ENCODE measurements at regions of chr6 and their contacts with region 1.

Region 1: DNA sequence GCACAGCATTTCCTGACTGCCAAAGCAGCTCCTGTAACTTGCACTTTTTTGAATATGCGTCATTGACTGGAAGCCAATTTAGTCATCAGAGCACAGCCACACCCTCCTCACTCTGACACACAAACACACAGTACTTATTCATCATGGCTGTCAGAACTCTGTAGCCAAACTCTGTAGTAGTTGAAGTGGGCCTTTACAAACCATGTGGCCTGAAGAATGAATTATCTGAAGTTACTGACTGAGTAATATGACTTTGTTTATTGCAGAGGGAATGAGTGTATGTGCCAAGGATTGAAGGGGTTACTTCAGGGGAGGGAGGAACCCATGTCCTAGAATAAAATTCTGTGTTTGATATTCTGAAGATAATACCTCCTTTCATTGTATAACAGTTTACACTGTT is 102.7 kb downstream of the FIG4 start:
- DNase-seq: no peak
- H3K4me3 ChIP-seq: no peak overlapping the region
- H3K27ac ChIP-seq: no peak overlapping the region
- H3K4me1 ChIP-seq: peaks cover 15% of the 10 kb centered on the region
- CTCF ChIP-seq: no peak

Region 2: DNA sequence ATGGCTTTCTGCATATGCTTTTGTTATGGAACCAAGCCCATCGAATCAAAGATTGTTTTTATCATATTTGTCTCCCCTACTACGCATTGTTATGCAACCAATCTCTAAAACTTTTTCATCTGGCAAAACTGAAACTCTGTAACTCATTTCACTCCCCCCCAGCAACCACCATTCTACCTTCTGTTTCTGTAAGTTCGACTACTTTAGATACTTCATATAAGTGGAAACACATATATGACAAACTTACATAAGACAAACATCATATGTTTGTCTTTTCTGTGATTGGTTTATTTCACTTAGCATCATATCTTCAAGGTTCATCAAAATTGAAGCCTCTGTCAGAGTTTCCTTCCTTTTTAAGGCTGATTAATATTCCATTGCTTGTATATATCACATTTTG is 663.7 kb before region 1 on chr6:
- CTCF ChIA-PET with region 1: no interaction called
- POLR2A ChIA-PET with region 1: no interaction called
- intact Hi-C with region 1: no loop called
- DNase-seq: no peak
- H3K4me3 ChIP-seq: no peak overlapping the region
- H3K27ac ChIP-seq: no peak overlapping the region
- H3K4me1 ChIP-seq: no peaks in the 10 kb centered on the region
- CTCF ChIP-seq: no peak

Region 3: DNA sequence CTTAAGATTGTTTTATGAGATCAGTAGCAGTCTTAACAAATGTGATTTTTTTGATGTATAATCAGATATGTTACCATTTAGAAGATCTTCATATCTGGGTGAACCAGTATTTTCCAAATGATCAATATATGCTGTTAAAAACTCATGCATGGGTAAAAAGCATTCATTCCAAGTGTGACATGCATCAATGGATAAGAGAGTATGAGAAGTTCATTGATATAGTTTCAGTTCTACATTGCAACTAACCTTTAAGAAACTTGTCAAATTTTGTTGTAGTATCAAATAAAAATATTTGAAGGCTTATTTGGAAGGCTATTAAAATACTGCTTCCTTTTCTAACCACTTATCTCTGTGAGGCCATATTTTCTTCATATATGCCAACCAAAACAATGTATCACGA is 15.0 kb after region 1 on chr6:
- CTCF ChIA-PET with region 1: no interaction called
- POLR2A ChIA-PET with region 1: interaction called, 10 read pairs
- intact Hi-C with region 1: no loop called
- DNase-seq: no peak
- H3K4me3 ChIP-seq: no peak overlapping the region
- H3K27ac ChIP-seq: no peak overlapping the region
- H3K4me1 ChIP-seq: no peaks in the 10 kb centered on the region
- CTCF ChIP-seq: no peak